ENCODE measurements at regions of chr15 and their contacts with region 1.

Region 1: DNA sequence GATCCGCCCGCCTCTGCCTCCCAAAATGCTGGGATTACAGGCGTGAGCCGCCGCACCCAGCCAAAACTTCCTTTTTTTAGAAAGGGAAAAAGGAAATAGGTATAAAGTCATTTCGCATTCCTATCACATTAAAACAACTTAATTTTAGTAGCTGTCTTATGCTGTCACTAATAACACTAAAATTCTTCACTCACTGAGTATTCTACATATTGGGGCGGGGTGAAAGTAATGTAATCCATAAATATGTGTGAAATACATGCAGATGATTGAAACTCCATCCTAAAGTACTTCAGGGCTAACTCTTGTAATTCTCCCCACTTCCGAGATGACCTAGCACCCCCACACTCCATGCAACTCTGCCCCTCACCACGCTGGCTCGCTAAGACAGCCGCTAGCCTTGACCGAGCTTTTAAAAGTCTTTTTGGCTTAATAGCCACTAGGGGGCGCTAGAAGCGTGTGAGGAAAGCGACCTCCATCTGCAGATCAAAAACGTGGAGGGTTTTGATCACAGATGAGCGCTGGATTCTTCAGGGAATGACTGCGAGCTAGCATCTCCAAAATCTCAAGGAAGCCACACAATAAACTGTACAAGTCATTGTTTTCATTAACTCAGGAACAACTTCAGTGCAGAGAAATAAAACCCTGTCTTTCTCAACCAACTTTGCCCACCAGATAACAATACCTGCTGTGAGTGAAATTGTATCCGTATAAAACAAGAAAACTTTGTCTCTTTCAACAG is 129.3 kb upstream of the IGF1R start:
- DNase-seq: peak; percentile 52
- ATAC-seq: peak; percentile 83 to 86

Region 2: DNA sequence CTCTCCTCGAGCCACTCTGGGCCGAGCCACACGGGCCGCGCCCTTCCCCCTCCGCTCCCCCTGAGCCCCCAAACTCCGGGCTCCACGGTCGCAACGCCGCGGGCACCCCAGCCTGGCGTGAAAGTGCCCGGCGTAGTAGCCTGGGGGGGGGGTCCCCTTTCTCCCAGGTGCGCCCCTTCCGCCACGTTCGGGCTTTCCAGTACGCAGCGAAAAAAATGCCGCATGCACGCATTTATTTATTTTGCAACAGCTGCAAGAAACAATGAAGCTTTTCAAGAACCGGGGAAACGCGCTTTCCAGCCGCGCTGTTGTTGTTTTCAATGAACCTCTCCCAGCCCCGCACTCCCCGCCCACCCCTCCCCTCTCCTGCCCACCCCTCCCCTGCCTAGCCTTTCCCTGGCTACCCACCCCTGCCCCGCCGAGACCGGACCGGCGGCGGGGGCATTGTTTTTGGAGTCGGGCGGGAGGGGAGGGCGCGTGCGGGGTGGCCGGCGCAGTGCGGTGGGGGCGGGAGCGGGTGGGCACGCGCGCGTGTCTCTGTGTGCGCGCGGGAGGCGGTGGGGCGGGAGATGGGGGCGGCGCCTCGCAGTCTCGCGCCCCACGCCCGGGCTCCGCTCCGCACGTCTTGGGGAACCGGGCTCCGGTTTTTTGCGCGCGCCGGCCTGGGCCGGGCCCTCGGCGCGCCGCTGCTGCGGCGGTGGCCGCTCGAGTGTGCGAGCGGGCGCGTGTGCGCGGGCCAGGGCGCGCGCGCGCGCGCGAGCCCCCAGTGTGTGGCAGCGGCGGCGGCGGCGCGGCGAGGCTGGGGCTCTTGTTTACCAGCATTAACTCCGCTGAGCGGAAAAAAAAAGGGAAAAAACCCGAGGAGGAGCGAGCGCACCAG is 129.0 kb after region 1 on chr15 and contains the start of gene IGF1R:
- intact Hi-C with region 1: loop called in 1 of 2 experiments (anchors 2 kb)
- DNase-seq: peak; percentile 87
- ATAC-seq: peak; percentile 81 to 82
- total RNA-seq, gene IGF1R: 27.3 to 56.2 TPM

Region 3: GRCh38 chr15:99076552-99077308 is 557.7 kb after region 1 on chr15:
- intact Hi-C with region 1: loop called (anchors 5 kb)
- DNase-seq: peak; percentile 69
- ATAC-seq: peak; percentile 78 to 92